ENCODE measurements at regions of chr19 and their contacts with region 1.

Region 1: DNA sequence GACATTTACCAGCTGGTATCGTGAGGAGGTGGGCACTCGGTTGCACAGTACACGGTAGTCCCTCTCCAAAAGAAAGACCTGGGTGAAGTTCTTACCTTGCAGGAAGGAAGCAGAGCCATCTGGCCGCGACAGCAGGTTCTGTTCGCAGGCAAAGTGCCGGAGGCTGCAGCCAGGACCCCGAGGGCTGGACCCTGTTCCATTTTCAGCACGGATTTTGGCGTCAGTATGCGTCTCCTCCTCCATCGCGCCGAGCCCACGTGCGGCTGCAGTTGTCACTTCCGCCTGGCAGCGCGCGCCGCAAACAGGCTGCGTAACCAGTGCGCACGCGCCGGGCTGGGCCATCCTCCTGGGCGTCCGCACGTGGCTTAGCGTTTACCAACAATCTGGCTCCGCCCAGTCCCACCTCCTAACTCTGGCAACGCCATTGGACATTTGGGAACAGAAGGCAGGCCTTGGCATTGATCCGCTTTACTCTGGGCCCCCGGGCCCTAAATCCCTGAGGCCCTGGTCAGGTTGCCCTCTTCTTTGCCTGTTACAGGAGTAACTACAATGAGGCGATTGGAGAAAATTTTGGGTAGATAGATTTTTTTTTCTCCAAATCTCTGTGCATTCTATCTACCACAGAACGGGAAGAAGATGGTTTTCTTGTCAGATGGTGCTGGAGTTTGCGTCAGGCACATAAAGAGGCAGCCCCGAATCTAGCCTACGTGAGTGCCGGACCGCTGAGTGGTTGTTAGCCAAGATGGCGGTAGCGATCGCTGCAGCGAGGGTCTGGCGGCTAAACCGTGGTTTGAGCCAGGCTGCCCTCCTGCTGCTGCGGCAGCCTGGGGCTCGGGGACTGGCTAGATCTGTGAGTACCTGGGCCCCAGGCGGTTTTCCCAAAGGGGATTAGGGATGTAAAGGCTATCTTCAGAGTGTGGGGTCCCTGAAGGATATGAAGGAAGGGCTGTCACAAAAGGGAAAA is at the starts of genes BCKDHA and EXOSC5:
- DNase-seq: peak; percentile 99 to 100
- ATAC-seq: peak; percentile 98 to 99
- H3K4me3 ChIP-seq: peak within 1 kb of the TSS; percentile 89 to 95 (median 92)
- H3K27ac ChIP-seq: peak within 1 kb of the TSS; percentile 90 to 97 (median 94)
- H3K4me1 ChIP-seq: peaks cover 23 to 25% of the 10 kb centered on the region in 2 donors
- H3K27me3 ChIP-seq: no peaks in the 10 kb centered on the region
- CTCF ChIP-seq: peak in 1 of 5 experiments; percentile 12
- POLR2A ChIP-seq: peak; percentile 50 to 67
- total RNA-seq, gene BCKDHA: 80.8 to 115 (median 84.1) TPM
- total RNA-seq, gene EXOSC5: 29.1 to 61.9 (median 40.9) TPM

Region 2: DNA sequence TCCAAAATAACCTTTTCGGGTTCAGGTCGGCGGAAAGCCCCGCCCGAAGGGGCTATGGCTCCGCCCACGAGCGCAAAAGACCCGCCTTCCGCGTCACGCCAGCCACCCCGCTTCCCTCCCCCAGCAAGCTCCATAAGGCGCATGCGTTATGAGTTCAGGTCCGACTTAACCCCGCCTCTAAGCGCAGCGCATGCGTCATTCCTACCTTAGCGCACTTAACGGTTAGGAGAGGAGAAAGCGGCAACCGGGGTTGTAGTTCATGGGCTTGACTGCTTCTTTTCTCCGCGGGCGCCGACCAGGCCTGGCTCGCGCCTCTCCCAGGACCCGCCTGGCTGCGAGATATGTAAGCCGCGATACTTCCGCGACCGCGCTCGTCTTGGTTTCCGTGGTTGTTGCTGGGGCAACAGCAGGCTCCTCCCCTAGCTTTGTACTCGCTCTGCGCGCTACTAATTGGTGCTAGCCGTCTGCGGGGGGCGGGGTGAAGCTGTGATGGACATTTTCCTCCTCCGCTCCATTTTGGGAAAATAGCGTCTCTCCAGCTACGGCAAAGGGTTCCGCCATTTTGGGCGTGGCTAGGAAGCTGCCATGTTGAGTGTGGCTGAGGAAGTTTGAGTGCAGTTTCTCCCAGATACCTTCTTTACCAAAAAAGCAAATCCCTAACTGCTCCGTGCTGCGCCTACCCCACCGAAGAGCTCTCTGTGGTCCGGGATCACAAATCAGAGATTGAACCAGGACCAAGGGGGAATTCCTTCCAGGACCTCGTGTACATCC is 33.4 kb before region 1 on chr19 and contains the start of gene B9D2:
- in situ Hi-C with region 1: no loop called
- intact Hi-C with region 1: loop called (anchors 1 kb)
- DNase-seq: peak; percentile 97 to 98
- ATAC-seq: peak; percentile 98 to 99
- H3K4me3 ChIP-seq: peak within 1 kb of the TSS; percentile 66 to 97 (median 86)
- H3K27ac ChIP-seq: peak within 1 kb of the TSS; percentile 94 to 100 (median 98)
- H3K4me1 ChIP-seq: peaks cover 3 to 6% of the 10 kb centered on the region in 2 donors
- H3K27me3 ChIP-seq: no peaks in the 10 kb centered on the region
- CTCF ChIP-seq: no peak
- POLR2A ChIP-seq: peak in 1 of 2 donors; percentile 49
- total RNA-seq, gene B9D2: 2.6 to 6.9 (median 4.5) TPM

Region 3: GRCh38 chr19:41415154-41415571 is 17.8 kb after region 1 on chr19:
- in situ Hi-C with region 1: no loop called
- intact Hi-C with region 1: loop called (anchors 2 kb)
- DNase-seq: peak; percentile 52 to 89
- ATAC-seq: peak; percentile 78 to 82
- H3K4me3 ChIP-seq: no peak overlapping the region
- H3K27ac ChIP-seq: peak overlapping the region; percentile 51 to 83 (median 78)
- H3K4me1 ChIP-seq: peaks cover 41 to 49% of the 10 kb centered on the region in 2 donors
- H3K27me3 ChIP-seq: no peaks in the 10 kb centered on the region
- CTCF ChIP-seq: no peak
- POLR2A ChIP-seq: no peak

Region 4: DNA sequence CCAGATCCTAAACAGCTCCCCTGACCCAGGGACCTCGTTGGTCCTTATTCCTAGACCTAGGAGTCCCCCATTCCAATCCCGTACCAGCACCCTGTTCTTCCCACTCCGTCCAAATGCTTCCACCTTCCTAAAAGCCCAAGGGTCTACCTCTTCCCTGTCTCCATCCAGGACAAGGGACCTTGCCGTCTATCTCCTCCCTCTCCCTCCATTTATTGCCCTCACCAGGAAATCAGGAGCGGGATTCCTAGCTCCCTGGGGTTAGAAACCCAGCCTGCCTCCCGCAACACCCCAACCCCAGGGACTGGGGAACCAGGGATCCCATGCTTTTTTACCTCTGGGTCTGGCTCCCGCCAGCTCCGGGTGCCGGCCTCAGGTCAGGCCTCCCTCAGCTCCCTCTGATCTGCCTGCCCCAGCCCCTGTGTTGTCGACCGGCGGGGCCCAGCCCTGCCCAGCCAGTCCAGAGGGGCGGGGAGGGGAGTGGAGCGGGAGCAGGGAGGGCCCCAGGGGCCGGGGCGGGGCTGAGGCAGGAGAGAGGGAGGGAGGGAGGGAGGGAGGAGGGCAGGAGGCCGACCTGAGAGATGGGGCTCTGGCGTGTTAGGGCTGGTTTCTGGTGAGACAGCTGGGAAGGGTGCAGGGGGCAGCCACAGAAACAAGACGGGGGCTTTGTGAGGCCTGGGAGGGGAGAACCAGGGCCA is 29.7 kb after region 1 on chr19 and contains the start of gene B3GNT8:
- in situ Hi-C with region 1: no loop called
- intact Hi-C with region 1: no loop called
- DNase-seq: peak; percentile 47 to 65
- ATAC-seq: peak; percentile 19 to 48
- H3K4me3 ChIP-seq: peak within 1 kb of the TSS; percentile 43 to 59 (median 54)
- H3K27ac ChIP-seq: peak within 1 kb of the TSS; percentile 60 to 74 (median 68)
- H3K4me1 ChIP-seq: peaks cover 20 to 31% of the 10 kb centered on the region in 2 donors
- H3K27me3 ChIP-seq: no peaks in the 10 kb centered on the region
- CTCF ChIP-seq: no peak
- POLR2A ChIP-seq: peak in 1 of 2 donors; percentile 19
- total RNA-seq, gene B3GNT8: 0.24 to 0.33 (median 0.33) TPM in 3 of 4 donors, not detected in the other